ENCODE measurements at regions of chr1 and their contacts with region 1.

Region 1: DNA sequence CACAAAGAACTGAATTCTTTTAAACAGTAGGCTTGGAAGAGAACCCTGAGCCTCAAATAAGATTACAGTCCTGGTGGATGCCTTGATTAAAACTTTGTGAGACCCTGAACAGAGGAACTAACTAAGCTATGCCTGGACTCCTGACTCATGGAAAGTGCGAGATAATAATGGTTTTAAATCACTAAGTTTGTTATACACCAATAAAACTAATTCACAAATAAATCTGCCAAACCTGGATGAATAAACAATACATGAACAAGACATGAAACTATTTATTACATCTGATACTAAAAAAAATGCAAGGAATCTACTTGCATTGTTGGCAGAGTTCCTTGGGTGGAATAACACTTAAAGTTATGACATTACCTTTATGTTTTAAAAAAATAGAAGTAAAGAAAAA is 118.4 kb downstream of the PIGK start:
- DNase-seq: no peak
- H3K27ac ChIP-seq: no peak overlapping the region
- CTCF ChIP-seq: no peak

Region 2: GRCh38 chr1:76939050-76939816 is 161.6 kb before region 1 on chr1:
- CTCF ChIA-PET with region 1: interaction called, 10 read pairs
- POLR2A ChIA-PET with region 1: no interaction called
- DNase-seq: no peak
- H3K27ac ChIP-seq: no peak overlapping the region
- CTCF ChIP-seq: no peak

Region 3: DNA sequence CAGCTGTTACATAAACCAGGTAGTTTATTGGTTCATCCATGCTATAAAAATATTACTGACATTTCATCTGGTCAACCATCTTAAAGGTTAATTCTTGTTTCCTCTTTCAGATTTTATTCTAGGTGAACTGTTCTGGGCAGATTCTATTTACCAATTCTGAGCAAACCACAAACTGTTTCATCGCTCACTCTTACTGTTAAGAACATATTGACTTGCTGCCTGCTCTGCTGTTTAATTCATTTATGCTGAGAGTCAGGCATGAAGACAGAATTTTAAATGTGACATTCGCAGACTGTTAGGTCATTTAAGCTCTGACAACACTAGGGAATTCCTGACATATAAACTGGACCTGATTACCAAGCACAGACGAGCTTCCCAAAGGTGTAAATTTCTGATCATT is 20.1 kb after region 1 on chr1:
- CTCF ChIA-PET with region 1: no interaction called
- POLR2A ChIA-PET with region 1: no interaction called
- DNase-seq: no peak
- H3K27ac ChIP-seq: no peak overlapping the region
- CTCF ChIP-seq: no peak